Prostate gland (tissue), 2 donors: ENCODE measurements at regions of chr5 and their contacts with region 1.

Region 1: GRCh38 chr5:32585446-32586275 is at the start of gene SUB1:
- DNase-seq: peak; percentile 85
- H3K4me3 ChIP-seq: peak within 1 kb of the TSS; percentile 77 to 100
- H3K27ac ChIP-seq: peak within 1 kb of the TSS; percentile 96 to 100
- H3K4me1 ChIP-seq: no peaks in the 10 kb centered on the region
- H3K27me3 ChIP-seq: no peaks in the 10 kb centered on the region
- CTCF ChIP-seq: peak in 1 of 4 experiments; percentile 3
- POLR2A ChIP-seq: peak; percentile 62
- total RNA-seq, gene SUB1: 135 to 190 TPM

Region 2: DNA sequence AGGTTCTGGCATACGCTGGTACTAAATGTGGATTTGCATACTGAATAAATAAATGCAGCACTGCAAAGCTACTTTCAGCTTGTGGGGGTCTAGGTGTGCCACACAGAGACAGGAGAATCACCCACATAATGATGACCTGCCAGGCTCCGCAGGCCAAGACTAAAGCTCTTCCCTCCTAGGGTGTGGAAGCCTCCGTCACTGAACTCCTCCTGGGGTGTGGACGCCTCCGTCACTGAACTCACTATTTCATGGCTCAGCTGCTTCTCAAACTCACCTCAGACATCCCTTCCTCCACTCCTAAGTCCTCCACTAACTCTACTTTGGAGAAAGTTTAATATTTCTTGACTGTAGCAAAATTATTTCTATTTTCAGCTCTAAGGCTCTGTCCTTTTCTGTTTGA is 346.3 kb before region 1 on chr5:
- intact Hi-C with region 1: loop called (anchors 5 kb)
- DNase-seq: no peak
- H3K4me3 ChIP-seq: no peak overlapping the region
- H3K27ac ChIP-seq: peak overlapping the region in 1 of 2 donors; percentile 1
- H3K4me1 ChIP-seq: no peaks in the 10 kb centered on the region
- H3K27me3 ChIP-seq: no peaks in the 10 kb centered on the region
- CTCF ChIP-seq: no peak
- POLR2A ChIP-seq: no peak

Region 3: DNA sequence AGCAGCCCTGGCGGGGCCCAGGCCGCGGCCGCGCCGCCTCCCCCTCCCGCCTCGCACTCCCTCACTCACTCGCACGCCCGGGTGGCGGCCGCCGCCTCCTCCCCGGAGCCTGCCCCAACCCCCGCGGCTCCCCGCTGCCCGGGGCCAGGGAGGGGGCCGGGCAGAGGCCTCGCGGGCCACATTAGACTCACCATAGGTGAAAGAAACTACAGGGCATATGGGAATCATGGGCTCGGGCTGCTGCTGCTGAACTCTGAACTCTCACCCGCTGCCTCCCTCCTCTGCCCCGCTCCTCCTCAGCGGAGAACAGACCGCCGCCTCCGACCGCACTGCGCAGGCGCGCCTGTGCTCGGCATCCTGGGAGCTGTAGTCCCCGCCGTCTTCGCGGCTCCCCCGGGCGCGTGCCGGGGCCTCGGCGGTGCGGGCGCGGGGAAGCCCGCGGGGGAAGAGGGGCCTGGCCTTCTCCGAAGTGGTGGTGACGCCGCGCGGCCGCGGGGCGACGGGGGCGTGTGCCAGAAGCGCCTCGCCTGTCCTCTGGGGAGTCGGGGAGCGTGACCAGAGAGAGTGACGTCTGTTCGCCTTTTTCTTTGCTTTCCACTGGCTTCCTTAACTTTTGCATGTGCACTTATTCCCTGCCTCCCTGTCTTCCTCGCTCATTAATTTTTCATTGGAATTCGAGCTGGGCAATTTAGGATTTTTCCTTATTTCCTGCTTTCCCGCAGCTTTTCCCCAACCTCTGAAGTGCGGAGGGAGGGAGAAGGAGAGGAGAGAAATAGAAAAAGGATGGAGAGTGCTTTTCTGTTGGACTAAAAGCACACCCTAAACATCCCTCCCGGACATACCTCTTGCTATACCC is 141.0 kb before region 1 on chr5 and contains the start of gene ZFR:
- intact Hi-C with region 1: loop called (anchors 5 kb)
- DNase-seq: peak; percentile 89
- H3K4me3 ChIP-seq: peak within 1 kb of the TSS; percentile 86 to 88
- H3K27ac ChIP-seq: peak within 1 kb of the TSS; percentile 97
- H3K4me1 ChIP-seq: peaks cover 4% of the 10 kb centered on the region
- H3K27me3 ChIP-seq: no peaks in the 10 kb centered on the region
- CTCF ChIP-seq: peak in 2 of 4 experiments; percentile 4 to 12
- POLR2A ChIP-seq: peak; percentile 79
- total RNA-seq, gene ZFR: 69.0 to 73.7 TPM

Region 4: DNA sequence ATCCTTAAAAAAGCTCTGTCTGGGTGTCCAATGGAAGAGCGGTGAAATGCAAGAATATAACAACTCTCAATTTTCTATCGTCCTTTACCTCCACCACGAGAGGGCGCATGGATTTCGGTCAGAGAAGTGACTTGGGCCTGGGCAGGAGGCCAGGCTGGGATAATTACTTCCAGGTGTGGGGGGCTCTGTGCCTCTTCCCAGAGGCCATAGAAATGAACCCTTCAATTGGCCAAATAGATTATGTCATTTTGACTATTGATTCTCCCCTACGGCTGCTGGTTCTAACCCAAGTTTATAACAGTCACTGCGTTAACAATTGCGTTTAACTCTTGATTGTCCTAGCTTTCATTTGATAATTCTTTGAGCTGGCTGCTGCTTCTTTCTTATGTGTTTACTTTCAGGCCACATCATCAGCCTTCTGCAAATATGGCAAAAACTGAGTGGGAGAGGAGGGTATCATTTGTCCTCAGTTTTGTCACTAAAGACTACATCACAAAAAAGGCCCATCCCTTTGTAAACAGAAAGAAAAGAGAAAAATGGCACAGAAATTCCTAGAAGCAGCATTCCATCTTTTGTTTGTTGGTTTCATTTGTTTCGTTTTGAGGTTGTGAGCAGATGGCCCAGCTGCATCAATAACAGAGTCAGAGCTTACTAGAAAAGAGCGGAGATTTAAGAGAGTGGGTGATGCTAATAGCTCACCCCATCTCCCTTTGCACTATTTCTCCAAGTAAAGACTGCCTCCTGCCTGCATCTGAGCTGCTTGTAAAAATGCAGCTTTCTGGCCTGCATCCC is 95.7 kb before region 1 on chr5:
- intact Hi-C with region 1: loop called (anchors 2 kb)
- DNase-seq: peak; percentile 63
- H3K4me3 ChIP-seq: no peak overlapping the region
- H3K27ac ChIP-seq: no peak overlapping the region
- H3K4me1 ChIP-seq: no peaks in the 10 kb centered on the region
- H3K27me3 ChIP-seq: no peaks in the 10 kb centered on the region
- CTCF ChIP-seq: peak; percentile 50 to 78 (median 74)
- POLR2A ChIP-seq: no peak